ENCODE measurements at regions of chr17 and their contacts with region 1.

Region 1: DNA sequence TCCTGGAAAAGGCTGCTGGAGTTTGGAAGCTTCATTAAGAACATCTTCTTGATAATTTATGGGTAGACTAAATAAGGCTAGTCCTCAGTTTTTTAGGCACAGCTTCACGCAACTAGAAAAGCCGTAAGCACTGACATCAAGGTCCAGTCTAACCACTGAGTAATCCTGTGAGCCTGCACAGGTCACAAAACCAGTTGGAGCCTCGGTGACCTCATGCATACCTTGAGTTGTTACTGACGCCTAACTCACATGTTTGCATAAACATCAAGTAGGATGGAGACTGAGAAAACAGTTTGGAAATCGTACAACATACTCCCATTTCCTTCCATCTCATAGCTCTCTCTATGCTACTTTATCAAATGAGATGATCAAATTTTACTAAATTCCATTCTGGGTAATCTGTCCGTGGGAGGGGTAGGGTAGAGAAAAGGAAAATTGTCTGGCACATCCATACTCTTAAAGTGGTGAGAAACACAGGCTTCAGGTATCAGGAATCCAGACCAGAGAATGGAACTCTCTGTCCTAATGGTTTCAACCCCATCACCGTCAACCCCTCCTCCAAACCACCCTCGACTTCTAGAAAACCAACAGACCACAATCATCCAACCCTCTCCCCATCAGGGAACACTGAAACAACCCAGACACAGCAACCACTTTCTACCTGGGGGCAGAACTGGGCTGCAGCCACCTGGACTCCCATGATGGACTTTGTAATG is 64.0 kb upstream of the RCVRN start:
- ATAC-seq: peak in 1 of 8 experiments; percentile 38
- H3K4me3 ChIP-seq: no peak overlapping the region
- H3K27ac ChIP-seq: no peak overlapping the region
- H3K4me1 ChIP-seq: no peaks in the 10 kb centered on the region

Region 2: DNA sequence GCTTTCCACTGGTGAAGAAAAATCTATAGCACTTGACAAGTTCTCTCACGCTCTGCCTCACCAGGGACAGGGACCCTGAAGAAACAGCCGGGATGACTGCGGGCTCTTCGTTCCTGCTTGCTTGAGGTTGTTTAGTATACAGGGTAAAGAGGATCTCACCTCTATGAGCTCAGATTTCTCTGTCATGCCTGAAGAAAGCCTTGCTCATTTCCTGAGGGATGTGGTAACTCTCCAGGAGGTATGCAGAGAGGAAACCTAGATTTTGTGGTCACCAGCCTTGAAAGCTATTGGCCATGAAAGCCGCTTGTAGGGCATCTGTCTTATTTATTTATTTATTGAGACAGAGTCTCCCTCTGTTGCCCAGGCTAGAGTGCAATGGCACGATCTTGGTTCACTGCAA is 300.5 kb before region 1 on chr17:
- in situ Hi-C with region 1: no loop called
- ATAC-seq: no peak
- H3K4me3 ChIP-seq: no peak overlapping the region
- H3K27ac ChIP-seq: no peak overlapping the region
- H3K4me1 ChIP-seq: no peaks in the 10 kb centered on the region

Region 3: DNA sequence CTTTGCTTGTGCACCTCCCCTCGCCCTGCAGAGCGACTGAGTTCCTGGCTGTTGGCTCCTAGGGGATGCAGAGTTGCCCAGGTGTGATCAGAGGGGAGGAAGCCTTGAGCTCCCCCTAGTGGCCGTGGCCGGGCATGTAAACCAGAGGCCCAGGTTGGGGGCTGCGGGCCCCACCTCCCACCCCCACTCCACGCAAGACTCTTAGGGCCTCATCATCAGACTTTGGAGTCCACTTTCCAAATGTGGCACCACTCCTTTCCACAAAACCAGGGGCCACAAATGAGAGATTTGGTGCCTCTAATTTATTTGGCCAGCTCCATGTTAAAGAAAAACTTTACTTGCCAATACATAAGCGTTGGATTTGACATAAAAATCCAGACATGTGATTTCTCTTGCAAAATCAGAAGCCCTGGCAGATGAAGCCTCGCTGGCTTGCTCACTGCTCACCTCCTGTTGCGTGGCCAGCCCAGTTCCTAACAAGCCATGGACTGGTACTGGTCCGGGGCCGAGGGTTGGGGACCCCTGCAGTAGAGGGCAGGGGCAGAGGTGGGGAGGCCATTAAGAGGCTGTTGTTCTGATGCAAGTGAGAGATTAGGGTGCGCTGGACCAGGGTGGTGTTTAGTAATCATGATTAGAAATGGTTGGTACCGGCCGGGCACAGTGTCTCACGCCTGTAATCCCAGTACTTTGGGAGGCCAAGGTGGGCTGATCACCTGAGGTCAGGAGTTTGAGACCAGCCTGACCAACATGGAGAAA is 258.0 kb after region 1 on chr17:
- in situ Hi-C with region 1: loop called in 2 of 9 experiments (anchors 10 to 25 kb)
- ATAC-seq: peak; percentile 34 to 93 (median 64)
- H3K4me3 ChIP-seq: no peak overlapping the region
- H3K27ac ChIP-seq: no peak overlapping the region
- H3K4me1 ChIP-seq: no peaks in the 10 kb centered on the region

Region 4: GRCh38 chr17:10471853-10472252 is 502.8 kb after region 1 on chr17:
- in situ Hi-C with region 1: no loop called
- ATAC-seq: peak in 1 of 8 experiments; percentile 45
- H3K4me3 ChIP-seq: no peak overlapping the region
- H3K27ac ChIP-seq: no peak overlapping the region
- H3K4me1 ChIP-seq: no peaks in the 10 kb centered on the region

Measured in motor neuron (in vitro differentiated cells).